Activated B cell treated with CpG ODN at 0.5 μM for 24 hours (primary cell): ENCODE measurements at regions of chrX and their contacts with region 1.

Region 1: DNA sequence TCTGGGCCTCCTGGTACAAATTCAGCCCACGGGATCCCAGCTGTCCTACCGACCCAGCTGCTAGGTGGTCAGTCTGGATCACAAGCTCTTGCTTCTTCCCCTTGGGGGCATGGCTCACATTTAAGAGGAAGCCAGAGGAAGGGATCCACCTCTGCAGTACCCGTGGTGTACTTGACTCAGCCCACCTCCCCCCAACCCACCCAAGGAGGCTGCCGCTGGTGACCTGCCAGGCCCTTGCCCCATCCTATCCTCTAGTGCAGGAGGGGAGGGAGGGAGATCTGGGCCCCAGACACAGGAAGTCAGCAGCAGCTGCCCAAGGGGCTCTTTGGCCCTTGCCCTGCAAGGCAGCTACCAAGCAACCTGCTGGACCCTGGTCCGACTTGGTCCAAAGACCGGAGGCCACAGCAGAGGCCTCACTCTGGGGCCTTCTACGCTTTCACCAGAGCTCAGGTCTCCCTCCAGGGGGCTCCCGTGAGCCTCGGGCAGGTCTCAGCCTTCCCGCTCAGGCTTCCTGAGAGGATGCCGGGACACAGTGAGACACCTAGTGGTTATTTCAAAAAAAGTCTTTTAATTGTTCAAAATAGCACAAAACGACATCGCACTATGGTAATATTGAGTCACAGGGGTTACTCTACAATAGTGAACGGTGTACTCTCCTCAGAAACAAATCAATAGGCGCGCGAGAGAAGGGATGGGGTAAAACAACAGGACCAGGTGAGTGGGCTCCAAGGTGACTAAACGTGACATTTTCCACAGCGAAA is 2.7 kb upstream of the RENBP start:
- DNase-seq: peak; percentile 63
- ATAC-seq: peak; percentile 86
- H3K4me3 Mint-ChIP-seq: no peak overlapping the region
- H3K27ac Mint-ChIP-seq: peak overlapping the region; percentile 63
- H3K4me1 Mint-ChIP-seq: peaks cover 17% of the 10 kb centered on the region
- H3K27me3 Mint-ChIP-seq: no peaks in the 10 kb centered on the region
- CTCF ChIP-seq: no peak

Region 2: DNA sequence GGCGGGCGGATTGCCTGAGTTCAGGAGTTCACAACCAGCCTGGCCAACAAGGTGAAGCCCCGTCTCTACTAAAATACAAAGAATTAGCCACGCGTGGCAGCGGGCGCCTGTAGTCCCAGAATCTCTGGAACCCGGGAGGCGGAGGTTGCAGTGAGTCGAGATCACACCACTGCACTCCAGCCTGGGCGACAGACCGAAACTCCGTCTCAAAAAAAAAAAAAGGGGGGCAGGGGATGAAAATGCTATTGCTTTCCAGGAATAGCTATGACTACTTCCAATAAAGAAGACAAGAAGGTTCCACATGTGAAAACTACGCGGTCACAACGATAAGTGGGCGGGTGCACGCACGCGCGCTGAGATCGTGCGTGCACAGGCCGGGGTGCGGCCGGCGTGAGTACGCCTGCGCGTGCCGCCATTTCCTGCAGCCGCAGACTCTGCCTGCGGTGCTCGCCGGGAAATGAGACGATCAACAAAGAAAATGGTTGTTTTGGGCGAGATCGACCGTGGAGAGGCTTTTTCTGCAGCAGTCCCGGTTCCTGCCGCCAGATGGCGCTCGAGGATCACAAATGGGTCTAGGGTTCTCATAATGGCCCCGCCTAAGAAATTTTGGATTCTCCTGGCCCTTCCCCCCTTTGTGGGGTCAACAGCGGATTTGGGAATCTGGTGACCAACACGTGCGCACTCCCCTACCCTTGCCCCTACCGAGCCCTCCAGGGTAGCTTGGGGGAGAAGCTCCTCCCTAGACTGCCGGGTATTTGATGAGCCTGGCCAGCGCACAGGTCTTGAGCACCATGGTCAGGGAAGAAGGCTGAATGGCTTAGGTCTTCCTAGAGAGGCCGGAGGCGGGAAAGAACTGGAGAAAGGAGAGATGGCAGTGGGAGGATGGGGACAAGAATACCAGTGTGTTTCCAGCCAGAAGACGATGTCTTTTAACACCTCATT is 988.4 kb before region 1 on chrX:
- CTCF ChIA-PET with region 1: no interaction called
- POLR2A ChIA-PET with region 1: no interaction called
- intact Hi-C with region 1: loop called (anchors 2 kb)
- DNase-seq: peak; percentile 79
- ATAC-seq: peak; percentile 95
- H3K4me3 Mint-ChIP-seq: peak overlapping the region; percentile 71
- H3K27ac Mint-ChIP-seq: peak overlapping the region; percentile 83
- H3K4me1 Mint-ChIP-seq: peaks cover 9% of the 10 kb centered on the region
- H3K27me3 Mint-ChIP-seq: no peaks in the 10 kb centered on the region
- CTCF ChIP-seq: no peak

Region 3: GRCh38 chrX:153687121-153688039 is 259.8 kb before region 1 on chrX and contains the start of gene SLC6A8:
- CTCF ChIA-PET with region 1: interaction called, 3 read pairs
- POLR2A ChIA-PET with region 1: no interaction called
- intact Hi-C with region 1: loop called (anchors 2 kb)
- DNase-seq: peak; percentile 34
- ATAC-seq: peak; percentile 68
- H3K4me3 Mint-ChIP-seq: peak within 1 kb of the TSS; percentile 83
- H3K27ac Mint-ChIP-seq: no peak within 1 kb of the TSS
- H3K4me1 Mint-ChIP-seq: no peaks in the 10 kb centered on the region
- H3K27me3 Mint-ChIP-seq: peaks cover 3% of the 10 kb centered on the region
- CTCF ChIP-seq: no peak
- total RNA-seq, gene SLC6A8: 0.81 and 1.2 TPM in 2 replicates

Region 4: GRCh38 chrX:153885968-153886903 is 61.0 kb before region 1 on chrX and contains the start of gene L1CAM:
- CTCF ChIA-PET with region 1: no interaction called
- POLR2A ChIA-PET with region 1: no interaction called
- intact Hi-C with region 1: loop called (anchors 5 kb)
- DNase-seq: no peak
- ATAC-seq: peak; percentile 20
- H3K4me3 Mint-ChIP-seq: peak within 1 kb of the TSS; percentile 65
- H3K27ac Mint-ChIP-seq: peak within 1 kb of the TSS; percentile 35
- H3K4me1 Mint-ChIP-seq: peaks cover 29% of the 10 kb centered on the region
- H3K27me3 Mint-ChIP-seq: no peaks in the 10 kb centered on the region
- CTCF ChIP-seq: no peak
- total RNA-seq, gene L1CAM: 7.3 and 11.0 TPM in 2 replicates

Region 5: DNA sequence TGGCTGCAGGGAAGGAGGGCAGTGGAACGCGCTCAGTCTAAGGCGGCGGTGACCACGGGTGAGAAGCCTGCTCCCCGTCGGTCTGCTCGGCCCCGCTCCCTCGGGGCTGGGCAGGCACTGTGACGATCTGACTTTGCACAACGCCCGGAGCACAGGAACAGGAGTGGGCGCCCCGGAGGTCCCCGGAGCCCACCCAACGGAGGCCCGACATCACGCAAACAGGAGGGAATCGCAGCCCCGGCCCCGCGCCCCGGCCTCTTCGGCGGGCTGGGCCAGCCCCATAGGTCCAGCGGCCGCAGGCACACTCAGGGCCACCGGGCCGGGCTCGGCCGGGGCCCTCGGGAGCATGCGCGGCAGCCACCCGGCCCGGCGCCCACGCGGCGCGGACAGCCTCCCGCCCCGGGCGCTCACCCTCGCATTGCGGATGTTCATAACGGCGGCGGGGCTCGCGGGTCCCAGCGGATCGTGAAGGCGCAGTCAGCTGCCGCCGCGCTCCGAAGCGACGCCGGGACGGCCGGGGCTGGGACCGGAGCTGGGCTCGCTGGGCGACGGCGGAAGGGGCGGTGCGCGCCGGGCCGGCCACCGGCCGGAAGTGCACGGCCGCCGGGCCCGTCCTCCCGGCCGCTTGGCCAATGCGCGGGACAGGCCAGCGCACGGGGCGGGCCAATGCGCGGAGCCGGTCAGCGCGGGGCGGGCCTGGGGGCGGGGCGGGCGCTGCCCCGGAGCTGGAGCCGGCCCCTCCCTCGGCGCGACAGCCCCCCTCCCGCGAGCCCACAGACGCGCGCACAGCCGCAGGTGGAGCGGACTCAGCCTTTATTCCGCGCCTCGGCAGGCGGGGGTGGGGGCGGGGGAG is 12.5 kb before region 1 on chrX and contains the start of gene NAA10:
- CTCF ChIA-PET with region 1: interaction called, 6 read pairs
- POLR2A ChIA-PET with region 1: interaction called, 305 read pairs
- intact Hi-C with region 1: loop called (anchors 1 kb)
- DNase-seq: peak; percentile 62
- ATAC-seq: peak; percentile 93
- H3K4me3 Mint-ChIP-seq: peak within 1 kb of the TSS; percentile 84
- H3K27ac Mint-ChIP-seq: peak within 1 kb of the TSS; percentile 46
- H3K4me1 Mint-ChIP-seq: peaks cover 24% of the 10 kb centered on the region
- H3K27me3 Mint-ChIP-seq: no peaks in the 10 kb centered on the region
- CTCF ChIP-seq: no peak
- total RNA-seq, gene NAA10: 94.8 and 109 TPM in 2 replicates

Region 6: DNA sequence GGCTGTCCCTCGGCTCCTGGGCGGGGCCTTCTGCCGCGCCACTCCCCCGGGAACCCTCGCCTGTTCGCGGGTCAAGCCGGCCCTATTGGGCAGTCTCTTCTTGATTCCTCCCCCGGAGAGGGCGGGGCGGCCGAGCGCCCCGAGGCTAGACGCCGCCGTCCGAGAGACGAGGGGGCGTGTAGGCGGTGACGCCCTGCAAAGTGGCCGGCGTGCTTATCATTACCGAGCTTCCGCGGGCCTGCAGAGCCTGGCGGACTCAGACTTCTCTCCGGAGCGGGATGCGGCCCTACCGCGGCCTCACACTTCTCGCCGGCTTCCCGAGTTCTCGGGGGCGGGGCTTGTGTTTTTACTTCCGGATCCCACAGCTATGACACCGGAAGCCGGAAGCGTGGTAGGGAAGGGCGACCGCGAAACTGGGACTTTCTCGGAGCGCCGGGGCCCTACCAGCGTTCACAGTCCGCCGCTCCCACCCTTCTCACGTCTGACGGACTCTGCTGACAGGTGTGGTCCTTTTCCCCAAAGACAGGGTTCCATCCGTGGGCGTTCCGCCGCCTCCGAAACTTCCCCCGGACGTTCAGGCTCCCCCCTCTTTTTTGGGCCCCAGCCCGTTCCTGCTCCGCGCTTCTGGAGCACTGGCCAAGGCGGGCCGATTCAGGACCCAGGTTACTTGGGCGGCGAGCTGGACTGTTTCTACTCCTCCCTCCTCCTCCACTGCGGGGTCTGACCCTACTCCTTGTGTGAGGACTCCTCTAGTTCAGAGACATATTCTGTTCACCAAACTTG is 600.2 kb after region 1 on chrX and contains the start of gene IKBKG:
- CTCF ChIA-PET with region 1: no interaction called
- POLR2A ChIA-PET with region 1: interaction called, 14 read pairs
- intact Hi-C with region 1: no loop called
- DNase-seq: peak; percentile 86
- ATAC-seq: peak; percentile 81
- H3K4me3 Mint-ChIP-seq: peak within 1 kb of the TSS; percentile 86
- H3K27ac Mint-ChIP-seq: peak within 1 kb of the TSS; percentile 95
- H3K4me1 Mint-ChIP-seq: peaks cover 45% of the 10 kb centered on the region
- H3K27me3 Mint-ChIP-seq: no peaks in the 10 kb centered on the region
- CTCF ChIP-seq: no peak
- total RNA-seq, gene IKBKG: 52.9 and 61.1 TPM in 2 replicates